Activated CD8-positive, alpha-beta T cell treated with anti-CD3 and anti-CD28 coated beads for 36 hours (primary cell): ENCODE measurements at regions of chr5 and their contacts with region 1.

Region 1: DNA sequence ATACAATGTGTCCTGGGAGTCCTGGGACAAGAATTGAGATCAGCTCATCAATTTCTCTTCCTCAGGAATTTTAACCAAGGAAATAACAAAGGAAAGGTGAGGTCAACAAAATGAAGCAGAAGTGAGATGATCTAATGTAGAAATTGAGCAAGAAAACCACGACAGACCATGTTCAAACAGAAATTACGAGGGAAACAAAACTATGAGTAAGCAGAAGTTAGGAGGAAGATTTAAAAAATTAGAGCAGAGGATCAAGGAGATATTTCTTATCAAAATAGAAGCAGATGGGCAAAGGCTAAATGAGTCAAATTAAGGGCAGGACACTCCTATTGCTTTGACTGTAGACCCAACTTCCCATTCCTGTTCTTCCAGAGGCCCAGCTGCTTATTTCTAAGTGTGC is 97.4 kb downstream of the HINT1 start:
- DNase-seq: no peak
- ATAC-seq: no peak
- H3K4me3 Mint-ChIP-seq: no peak overlapping the region
- H3K27ac Mint-ChIP-seq: peak overlapping the region; percentile 28
- H3K4me1 Mint-ChIP-seq: peaks cover 63% of the 10 kb centered on the region
- H3K27me3 Mint-ChIP-seq: no peaks in the 10 kb centered on the region
- CTCF ChIP-seq: no peak

Region 2: GRCh38 chr5:131081374-131081773 is 13.7 kb after region 1 on chr5:
- CTCF ChIA-PET with region 1: interaction called, 11 read pairs
- POLR2A ChIA-PET with region 1: no interaction called
- intact Hi-C with region 1: no loop called
- DNase-seq: no peak
- ATAC-seq: no peak
- H3K4me3 Mint-ChIP-seq: no peak overlapping the region
- H3K27ac Mint-ChIP-seq: no peak overlapping the region
- H3K4me1 Mint-ChIP-seq: peaks cover 18% of the 10 kb centered on the region
- H3K27me3 Mint-ChIP-seq: no peaks in the 10 kb centered on the region
- CTCF ChIP-seq: no peak